Activated naive CD4-positive, alpha-beta T cell treated with anti-CD3 and anti-CD28 coated beads, Interleukin-2, amount 10 ng/mL, durations not matched to agents 7 days and 5 days (primary cell): ENCODE measurements at regions of chr3 and their contacts with region 1.

Region 1: DNA sequence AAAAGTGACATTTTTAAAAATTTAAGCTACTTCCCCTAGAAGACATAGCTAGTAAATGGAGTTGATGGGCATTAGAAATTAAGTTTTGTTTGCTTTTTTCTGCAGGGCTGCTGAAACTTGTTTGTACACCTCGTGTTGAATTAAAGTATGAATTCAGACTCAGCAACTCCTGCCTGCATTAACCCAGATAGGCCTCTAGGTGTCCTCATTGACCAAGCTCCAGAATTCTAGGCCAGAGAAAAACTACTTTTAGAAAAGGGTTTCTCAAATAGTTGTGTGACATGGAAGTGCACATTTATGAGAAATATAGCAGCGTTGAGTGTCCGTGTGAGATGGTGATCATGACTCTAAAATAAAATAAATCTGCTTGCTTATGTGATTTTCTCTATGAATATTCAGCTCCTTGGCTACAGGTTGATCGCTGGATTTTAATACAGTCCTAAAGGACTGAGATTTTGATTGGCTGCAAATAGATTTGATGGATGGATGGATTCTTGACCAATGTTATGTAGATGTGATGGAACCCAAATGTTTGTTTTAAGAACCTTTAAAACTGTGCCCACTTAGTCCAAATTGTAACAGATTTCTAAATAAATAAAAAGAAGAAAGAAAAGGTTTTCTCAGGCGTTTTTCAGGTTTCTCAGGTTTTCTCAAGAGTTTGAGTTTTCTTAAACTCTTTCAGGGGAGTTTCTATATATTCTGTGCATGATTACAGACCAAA is 39.4 kb upstream of the LMOD3 start:
- DNase-seq: peak; percentile 33
- H3K4me3 Mint-ChIP-seq: no peak overlapping the region
- H3K27ac Mint-ChIP-seq: no peak overlapping the region
- H3K4me1 Mint-ChIP-seq: peaks cover 8% of the 10 kb centered on the region
- H3K27me3 Mint-ChIP-seq: no peaks in the 10 kb centered on the region

Region 2: GRCh38 chr3:69172058-69172457 is 10.3 kb after region 1 on chr3:
- CTCF ChIA-PET with region 1: interaction called, 10 read pairs
- DNase-seq: no peak
- H3K4me3 Mint-ChIP-seq: no peak overlapping the region
- H3K27ac Mint-ChIP-seq: no peak overlapping the region
- H3K4me1 Mint-ChIP-seq: peaks cover 5% of the 10 kb centered on the region
- H3K27me3 Mint-ChIP-seq: no peaks in the 10 kb centered on the region

Region 3: DNA sequence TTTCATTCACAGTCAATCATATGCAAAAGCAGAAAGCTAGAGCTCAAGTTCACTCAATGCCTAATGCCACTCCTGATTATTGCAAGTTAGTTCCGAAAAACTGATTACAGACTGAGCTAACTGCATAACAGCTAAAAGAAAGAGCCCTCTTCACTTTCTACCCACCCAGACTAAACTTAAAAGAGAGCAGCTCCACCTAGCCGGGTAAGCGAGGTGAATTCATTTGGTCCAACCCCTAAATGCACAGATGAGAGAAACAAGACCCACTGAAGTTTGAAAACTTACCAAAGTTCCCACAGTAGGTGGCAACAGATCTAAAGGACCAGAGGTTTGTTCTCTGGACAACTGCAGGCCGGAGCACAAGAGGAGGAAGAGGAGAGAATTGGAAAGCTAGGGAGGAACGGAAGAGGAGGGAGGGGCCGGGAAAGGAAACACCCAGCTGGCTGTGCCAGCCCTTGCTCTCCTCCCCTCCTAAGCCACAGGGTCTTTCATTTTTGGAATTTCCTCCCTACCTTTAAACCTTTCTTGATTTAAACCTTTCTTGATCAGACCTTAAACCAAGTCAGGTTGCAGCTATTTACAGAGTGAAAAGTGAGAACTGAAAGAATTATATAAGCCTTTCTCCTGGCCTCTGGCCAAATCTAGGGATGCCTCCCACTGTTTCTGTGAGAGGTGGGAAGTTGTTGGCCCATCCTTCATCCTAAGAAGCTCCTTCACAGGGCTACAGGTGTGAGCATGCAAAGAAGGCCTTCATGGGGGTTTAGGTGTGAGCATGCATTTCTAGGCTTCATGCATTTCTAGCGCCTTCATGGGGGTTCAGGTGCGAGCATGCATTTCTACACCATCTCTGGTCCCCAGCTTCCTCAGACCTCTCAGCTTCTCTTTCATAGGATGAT is 75.3 kb after region 1 on chr3:
- CTCF ChIA-PET with region 1: interaction called, 19 read pairs
- DNase-seq: no peak
- H3K4me3 Mint-ChIP-seq: peak overlapping the region; percentile 35
- H3K27ac Mint-ChIP-seq: no peak overlapping the region
- H3K4me1 Mint-ChIP-seq: peaks cover 20% of the 10 kb centered on the region
- H3K27me3 Mint-ChIP-seq: no peaks in the 10 kb centered on the region

Region 4: GRCh38 chr3:69282181-69282580 is 120.4 kb after region 1 on chr3:
- CTCF ChIA-PET with region 1: interaction called, 13 read pairs
- DNase-seq: peak; percentile 23
- H3K4me3 Mint-ChIP-seq: no peak overlapping the region
- H3K27ac Mint-ChIP-seq: no peak overlapping the region
- H3K4me1 Mint-ChIP-seq: peaks cover 6% of the 10 kb centered on the region
- H3K27me3 Mint-ChIP-seq: peaks cover 4% of the 10 kb centered on the region

Region 5: GRCh38 chr3:69410250-69410649 is 248.5 kb after region 1 on chr3:
- CTCF ChIA-PET with region 1: interaction called, 23 read pairs
- DNase-seq: peak; percentile 81
- H3K4me3 Mint-ChIP-seq: no peak overlapping the region
- H3K27ac Mint-ChIP-seq: no peak overlapping the region
- H3K4me1 Mint-ChIP-seq: no peaks in the 10 kb centered on the region
- H3K27me3 Mint-ChIP-seq: peaks cover 21% of the 10 kb centered on the region

Region 6: GRCh38 chr3:69439643-69440270 is 278.0 kb after region 1 on chr3:
- CTCF ChIA-PET with region 1: interaction called, 12 read pairs
- DNase-seq: no peak
- H3K4me3 Mint-ChIP-seq: no peak overlapping the region
- H3K27ac Mint-ChIP-seq: no peak overlapping the region
- H3K4me1 Mint-ChIP-seq: no peaks in the 10 kb centered on the region
- H3K27me3 Mint-ChIP-seq: no peaks in the 10 kb centered on the region